Colonic mucosa (tissue), 4 donors: ENCODE measurements at regions of chr5 and their contacts with region 1.

Region 1: GRCh38 chr5:80181618-80182211 is 74.1 kb downstream of the SERINC5 start:
- DNase-seq: peak; percentile 89
- H3K4me3 ChIP-seq: no peak overlapping the region
- H3K27ac ChIP-seq: peak overlapping the region; percentile 74
- H3K4me1 ChIP-seq: peaks cover 22% of the 10 kb centered on the region
- H3K27me3 ChIP-seq: no peaks in the 10 kb centered on the region
- CTCF ChIP-seq: no peak

Region 2: GRCh38 chr5:80255732-80256479 is 74.2 kb after region 1 on chr5 and contains the start of gene SERINC5:
- intact Hi-C with region 1: loop called (anchors 5 kb)
- DNase-seq: peak; percentile 90
- H3K4me3 ChIP-seq: peak within 1 kb of the TSS; percentile 92
- H3K27ac ChIP-seq: peak within 1 kb of the TSS; percentile 99
- H3K4me1 ChIP-seq: peaks cover 4% of the 10 kb centered on the region
- H3K27me3 ChIP-seq: no peaks in the 10 kb centered on the region
- CTCF ChIP-seq: no peak
- total RNA-seq, gene SERINC5: 138 to 141 TPM

Region 3: GRCh38 chr5:80554646-80555045 is 372.9 kb after region 1 on chr5:
- intact Hi-C with region 1: no loop called
- DNase-seq: no peak
- H3K4me3 ChIP-seq: no peak overlapping the region
- H3K27ac ChIP-seq: no peak overlapping the region
- H3K4me1 ChIP-seq: no peaks in the 10 kb centered on the region
- H3K27me3 ChIP-seq: no peaks in the 10 kb centered on the region
- CTCF ChIP-seq: no peak